ENCODE measurements at regions of chr2 and their contacts with region 1.

Region 1: GRCh38 chr2:133591164-133591563 is 22.9 kb upstream of the NCKAP5 start:
- DNase-seq: no peak
- H3K4me3 ChIP-seq: no peak overlapping the region
- H3K27ac ChIP-seq: no peak overlapping the region
- H3K4me1 ChIP-seq: peaks cover 12% of the 10 kb centered on the region
- H3K27me3 ChIP-seq: no peaks in the 10 kb centered on the region
- CTCF ChIP-seq: no peak
- POLR2A ChIP-seq: no peak

Region 2: GRCh38 chr2:133564832-133565231 is 26.3 kb before region 1 on chr2:
- intact Hi-C with region 1: loop called (anchors 1 kb)
- DNase-seq: no peak
- H3K4me3 ChIP-seq: no peak overlapping the region
- H3K27ac ChIP-seq: no peak overlapping the region
- H3K4me1 ChIP-seq: peaks cover 29% of the 10 kb centered on the region
- H3K27me3 ChIP-seq: no peaks in the 10 kb centered on the region
- CTCF ChIP-seq: no peak
- POLR2A ChIP-seq: no peak

Measured in vagina (tissue), 2 donors.